WTC11 (cell line): ENCODE measurements at regions of chr5 and their contacts with region 1.

Region 1: GRCh38 chr5:134465816-134466240 is 54.1 kb upstream of the CDKN2AIPNL start:
- DNase-seq: peak; percentile 89
- ATAC-seq: peak; percentile 77
- H3K4me3 Mint-ChIP-seq: peak overlapping the region; percentile 86
- H3K27ac Mint-ChIP-seq: peak overlapping the region; percentile 94
- H3K4me1 Mint-ChIP-seq: peaks cover 20% of the 10 kb centered on the region
- H3K27me3 Mint-ChIP-seq: no peaks in the 10 kb centered on the region
- CTCF ChIP-seq: no peak

Region 2: DNA sequence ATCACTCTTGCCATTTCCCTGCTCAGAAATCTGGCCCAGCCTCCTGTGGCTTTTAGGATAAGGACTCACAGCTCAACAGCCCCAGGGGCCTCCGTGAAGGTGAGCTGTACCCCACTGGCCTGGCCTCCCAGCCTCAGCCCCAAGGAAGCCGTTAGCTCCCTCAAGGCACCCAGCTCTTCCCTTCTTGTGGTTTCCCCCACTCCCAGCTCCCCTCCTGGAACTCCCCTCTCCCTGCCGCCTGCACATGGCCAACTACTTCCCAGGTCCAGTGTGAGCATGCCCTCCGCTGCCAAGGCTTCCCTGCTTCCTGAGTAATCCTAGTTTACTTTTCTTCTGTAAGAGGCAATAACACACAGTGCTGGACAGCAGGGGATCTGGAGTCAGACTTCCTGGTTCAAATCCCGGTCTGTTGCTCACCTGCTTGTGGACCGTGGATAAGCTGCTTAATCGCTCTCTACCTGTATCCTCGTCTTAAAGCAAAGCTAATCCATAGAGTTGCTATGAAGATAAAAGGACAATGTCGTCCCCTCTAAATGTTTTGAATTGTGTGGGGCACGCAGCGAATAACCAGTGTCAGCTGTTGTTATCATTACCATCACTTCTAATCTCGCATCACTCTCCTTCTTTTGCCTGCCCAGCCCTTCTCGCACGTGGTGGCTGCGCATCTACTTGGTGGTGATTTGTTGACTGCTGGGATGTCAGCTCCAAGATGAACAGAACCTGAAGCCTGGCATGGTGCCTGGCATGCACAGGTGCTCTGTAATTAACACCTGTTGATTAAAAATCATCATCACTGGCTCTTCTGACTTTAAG is 584.0 kb before region 1 on chr5:
- CTCF ChIA-PET with region 1: no interaction called
- POLR2A ChIA-PET with region 1: no interaction called
- DNase-seq: no peak
- ATAC-seq: no peak
- H3K4me3 Mint-ChIP-seq: no peak overlapping the region
- H3K27ac Mint-ChIP-seq: no peak overlapping the region
- H3K4me1 Mint-ChIP-seq: peaks cover 26% of the 10 kb centered on the region
- H3K27me3 Mint-ChIP-seq: no peaks in the 10 kb centered on the region; the same call in 1 of the 2 replicates
- CTCF ChIP-seq: no peak

Region 3: GRCh38 chr5:134370871-134371833 is 94.7 kb before region 1 on chr5 and contains the start of gene UBE2B:
- CTCF ChIA-PET with region 1: interaction called, 4 read pairs
- POLR2A ChIA-PET with region 1: interaction called, 13 read pairs
- DNase-seq: peak; percentile 95
- ATAC-seq: peak; percentile 66
- H3K4me3 Mint-ChIP-seq: peak within 1 kb of the TSS; percentile 96
- H3K27ac Mint-ChIP-seq: peak within 1 kb of the TSS; percentile 100
- H3K4me1 Mint-ChIP-seq: peaks cover 31% of the 10 kb centered on the region
- H3K27me3 Mint-ChIP-seq: peaks cover 4% of the 10 kb centered on the region; the same call in 1 of the 2 replicates
- CTCF ChIP-seq: no peak
- total RNA-seq, gene UBE2B: 34.6 to 39.7 TPM (median 39.2 TPM) in 3 replicates

Region 4: DNA sequence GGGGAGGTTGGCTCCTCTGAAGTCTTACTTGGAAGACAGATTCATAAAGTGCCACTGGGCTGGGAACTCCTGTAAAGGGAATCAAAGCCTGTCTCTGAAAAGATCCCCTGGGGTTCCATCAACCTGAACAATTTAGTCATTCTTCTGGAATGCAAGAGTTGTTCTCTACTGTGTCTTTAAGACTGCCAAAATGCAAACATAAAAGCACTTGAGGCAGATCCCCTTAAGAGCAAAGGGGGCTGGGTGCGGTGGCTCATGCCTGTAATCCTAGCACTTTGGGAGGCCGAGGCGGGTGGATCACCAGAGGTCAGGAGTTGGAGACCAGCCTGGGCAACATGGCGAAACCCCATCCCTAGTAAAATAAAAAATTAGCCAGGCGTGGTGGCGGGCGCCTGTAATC is 70.9 kb before region 1 on chr5:
- CTCF ChIA-PET with region 1: no interaction called
- POLR2A ChIA-PET with region 1: no interaction called
- DNase-seq: no peak
- ATAC-seq: peak; percentile 48
- H3K4me3 Mint-ChIP-seq: no peak overlapping the region
- H3K27ac Mint-ChIP-seq: no peak overlapping the region
- H3K4me1 Mint-ChIP-seq: peaks cover 11% of the 10 kb centered on the region
- H3K27me3 Mint-ChIP-seq: no peaks in the 10 kb centered on the region
- CTCF ChIP-seq: no peak

Region 5: GRCh38 chr5:134411546-134412266 is 54.1 kb before region 1 on chr5 and contains the start of gene CDKN2AIPNL:
- CTCF ChIA-PET with region 1: interaction called, 16 read pairs
- POLR2A ChIA-PET with region 1: interaction called, 9 read pairs
- DNase-seq: peak; percentile 92
- ATAC-seq: peak; percentile 98
- H3K4me3 Mint-ChIP-seq: peak within 1 kb of the TSS; percentile 97
- H3K27ac Mint-ChIP-seq: peak within 1 kb of the TSS; percentile 76
- H3K4me1 Mint-ChIP-seq: peaks cover 42% of the 10 kb centered on the region
- H3K27me3 Mint-ChIP-seq: no peaks in the 10 kb centered on the region
- CTCF ChIP-seq: no peak
- total RNA-seq, gene CDKN2AIPNL: 54.3 to 60.7 TPM (median 59.8 TPM) in 3 replicates

Region 6: DNA sequence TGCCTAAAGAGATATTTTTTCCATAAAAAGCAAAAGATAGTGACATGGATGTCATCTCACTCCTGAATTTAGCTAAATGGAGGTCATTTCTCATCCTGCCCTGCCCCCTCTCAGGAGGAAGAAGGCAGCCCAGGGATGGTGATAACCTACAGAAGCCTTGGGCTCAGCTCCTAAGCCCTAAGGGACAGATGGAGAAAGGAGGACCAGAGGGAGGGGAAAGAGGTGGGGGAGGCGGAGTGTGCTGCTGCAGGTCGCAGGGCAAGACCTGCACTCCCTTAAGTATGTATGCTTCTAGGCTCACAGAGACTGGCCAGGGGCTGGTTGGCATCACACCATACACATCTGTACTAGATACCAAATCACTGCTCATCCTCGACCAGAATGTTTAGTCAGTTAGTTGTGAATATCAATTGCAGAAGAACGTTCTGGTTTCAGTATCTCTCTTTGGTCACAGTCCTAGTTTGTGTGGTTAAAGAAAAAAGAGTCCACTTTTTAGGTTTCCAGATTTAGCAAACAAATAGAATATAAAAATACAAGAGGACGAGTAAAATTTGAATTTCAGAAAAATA is 35.7 kb before region 1 on chr5:
- CTCF ChIA-PET with region 1: interaction called, 25 read pairs
- POLR2A ChIA-PET with region 1: interaction called, 32 read pairs
- DNase-seq: peak; percentile 33
- ATAC-seq: peak; percentile 81
- H3K4me3 Mint-ChIP-seq: peak overlapping the region; percentile 65
- H3K27ac Mint-ChIP-seq: peak overlapping the region; percentile 83
- H3K4me1 Mint-ChIP-seq: peaks cover 58% of the 10 kb centered on the region
- H3K27me3 Mint-ChIP-seq: no peaks in the 10 kb centered on the region
- CTCF ChIP-seq: no peak

Region 7: DNA sequence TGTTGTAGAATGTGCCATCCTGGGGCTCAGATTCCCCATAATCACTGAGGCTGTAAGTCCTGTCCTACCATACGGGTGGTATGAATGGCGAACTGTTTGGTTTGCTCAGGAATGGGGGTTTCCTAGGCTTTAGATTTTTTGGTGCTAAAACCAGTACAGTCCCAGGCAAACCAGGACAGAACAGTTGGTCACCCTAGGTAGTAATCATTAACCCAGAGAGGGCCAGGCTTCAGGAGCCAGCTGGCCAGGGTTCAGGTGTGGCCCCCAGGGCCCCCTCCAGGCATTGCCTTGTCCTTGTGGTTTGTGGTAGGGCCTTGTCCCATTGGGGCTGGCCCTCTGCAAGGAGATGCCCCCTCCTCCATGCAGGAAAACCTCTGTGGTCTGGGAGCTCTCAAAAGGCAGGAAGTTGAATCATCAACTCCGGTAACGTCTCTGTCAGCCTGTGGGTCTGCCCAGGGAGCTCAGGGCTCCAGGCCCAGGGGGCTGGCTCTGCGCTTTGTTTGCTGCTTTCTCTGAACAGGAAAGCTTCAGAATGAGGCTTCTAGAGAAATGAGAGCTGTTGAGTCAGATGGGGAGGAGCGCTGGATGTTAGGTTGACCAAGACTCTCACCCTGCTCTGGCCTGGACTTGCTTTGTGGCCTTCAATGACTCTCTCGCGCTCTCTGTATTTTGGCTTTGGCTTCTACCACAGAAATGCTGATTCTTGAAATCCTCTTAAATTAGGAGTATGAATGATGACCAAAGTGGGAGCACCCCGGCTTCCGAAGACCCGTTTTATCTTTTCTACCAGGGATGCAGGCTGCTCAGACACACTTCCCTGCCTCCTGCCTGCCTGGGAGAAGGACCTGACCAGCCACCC is 37.5 kb after region 1 on chr5:
- CTCF ChIA-PET with region 1: interaction called, 5 read pairs
- POLR2A ChIA-PET with region 1: interaction called, 17 read pairs
- DNase-seq: peak; percentile 27
- ATAC-seq: peak; percentile 46
- H3K4me3 Mint-ChIP-seq: no peak overlapping the region
- H3K27ac Mint-ChIP-seq: peak overlapping the region; percentile 88
- H3K4me1 Mint-ChIP-seq: peaks cover 31% of the 10 kb centered on the region
- H3K27me3 Mint-ChIP-seq: no peaks in the 10 kb centered on the region
- CTCF ChIP-seq: no peak

Region 8: DNA sequence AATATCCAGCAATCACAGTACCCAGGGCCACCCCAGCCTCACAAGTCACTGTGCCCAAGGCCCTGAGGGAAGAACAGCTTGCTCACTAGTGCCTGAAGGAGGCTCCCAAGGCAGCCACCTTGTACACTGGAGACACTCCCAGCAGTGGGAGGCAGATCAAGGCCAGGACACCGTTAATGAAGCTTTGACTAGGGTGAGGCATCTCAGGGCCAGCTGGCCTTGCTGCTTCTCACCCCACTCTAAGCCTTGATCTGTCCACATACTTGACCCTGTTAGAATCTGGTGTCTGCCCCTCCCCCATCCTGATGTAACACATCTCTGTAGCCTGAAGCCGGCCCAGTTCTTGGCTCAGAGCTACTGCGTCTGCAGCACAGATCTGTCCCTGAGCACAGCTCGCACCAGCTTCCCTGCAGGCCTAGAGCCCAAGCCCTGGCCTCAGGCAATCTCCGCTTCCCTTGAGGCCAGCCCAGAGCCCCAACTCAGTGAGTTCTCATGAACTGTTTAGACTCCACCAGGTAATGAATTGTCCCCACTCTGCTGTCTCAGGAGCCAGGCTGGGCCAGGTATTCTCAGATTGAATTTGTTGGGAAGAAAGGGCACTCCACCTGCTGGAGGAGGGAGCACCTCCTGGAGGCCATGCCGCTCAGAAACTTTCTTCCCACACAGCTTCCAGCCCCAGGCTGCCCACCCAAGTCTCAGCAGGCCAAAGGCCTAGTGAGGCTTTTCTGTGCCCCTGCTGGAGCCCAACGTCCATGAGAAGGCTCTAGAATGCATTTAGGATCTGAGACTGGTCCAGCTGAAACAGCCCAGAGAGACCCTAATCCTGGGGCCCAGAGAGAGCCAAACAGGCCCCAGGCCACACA is 46.2 kb after region 1 on chr5:
- CTCF ChIA-PET with region 1: interaction called, 21 read pairs
- POLR2A ChIA-PET with region 1: interaction called, 55 read pairs
- DNase-seq: peak; percentile 76
- ATAC-seq: peak; percentile 68
- H3K4me3 Mint-ChIP-seq: peak overlapping the region; percentile 30
- H3K27ac Mint-ChIP-seq: peak overlapping the region; percentile 97
- H3K4me1 Mint-ChIP-seq: peaks cover 51% of the 10 kb centered on the region
- H3K27me3 Mint-ChIP-seq: no peaks in the 10 kb centered on the region
- CTCF ChIP-seq: no peak

Region 9: GRCh38 chr5:134541736-134542376 is 76.0 kb after region 1 on chr5:
- CTCF ChIA-PET with region 1: interaction called, 6 read pairs
- POLR2A ChIA-PET with region 1: interaction called, 13 read pairs
- DNase-seq: peak; percentile 82
- ATAC-seq: peak; percentile 13
- H3K4me3 Mint-ChIP-seq: no peak overlapping the region
- H3K27ac Mint-ChIP-seq: no peak overlapping the region
- H3K4me1 Mint-ChIP-seq: peaks cover 36% of the 10 kb centered on the region
- H3K27me3 Mint-ChIP-seq: no peaks in the 10 kb centered on the region
- CTCF ChIP-seq: no peak